Activated T-helper 1 cell treated with anti-CD3 and anti-CD28 coated beads, Interleukin-12 subunit alpha, Interleukin-12 subunit beta, Interleukin-2, Interleukin-4 antibody, amounts not matched to agents 30 ng/mL and 10 ng/mL and 1 ng/mL, durations not matched to agents 14 hours and 24 hours and 36 hours (primary cell): ENCODE measurements at regions of chr3 and their contacts with region 1.

Region 1: GRCh38 chr3:185983495-185984141 is 45.8 kb upstream of the TRA2B start:
- DNase-seq: peak; percentile 41
- H3K4me3 Mint-ChIP-seq: no peak overlapping the region
- H3K27ac Mint-ChIP-seq: no peak overlapping the region
- H3K4me1 Mint-ChIP-seq: peaks cover 5% of the 10 kb centered on the region
- H3K27me3 Mint-ChIP-seq: peaks cover 40% of the 10 kb centered on the region

Region 2: GRCh38 chr3:186241910-186242821 is 258.5 kb after region 1 on chr3:
- intact Hi-C with region 1: loop called (anchors 1 kb)
- DNase-seq: peak; percentile 30
- H3K4me3 Mint-ChIP-seq: peak overlapping the region; percentile 25
- H3K27ac Mint-ChIP-seq: no peak overlapping the region
- H3K4me1 Mint-ChIP-seq: no peaks in the 10 kb centered on the region
- H3K27me3 Mint-ChIP-seq: peaks cover 19% of the 10 kb centered on the region

Region 3: GRCh38 chr3:186277268-186277909 is 293.8 kb after region 1 on chr3:
- intact Hi-C with region 1: loop called (anchors 1 kb)
- DNase-seq: no peak
- H3K4me3 Mint-ChIP-seq: no peak overlapping the region
- H3K27ac Mint-ChIP-seq: no peak overlapping the region
- H3K4me1 Mint-ChIP-seq: no peaks in the 10 kb centered on the region
- H3K27me3 Mint-ChIP-seq: peaks cover 12% of the 10 kb centered on the region

Region 4: GRCh38 chr3:186315581-186316354 is 332.1 kb after region 1 on chr3:
- intact Hi-C with region 1: no loop called
- DNase-seq: no peak
- H3K4me3 Mint-ChIP-seq: no peak overlapping the region
- H3K27ac Mint-ChIP-seq: no peak overlapping the region
- H3K4me1 Mint-ChIP-seq: no peaks in the 10 kb centered on the region
- H3K27me3 Mint-ChIP-seq: peaks cover 10% of the 10 kb centered on the region

Region 5: GRCh38 chr3:186540221-186540834 is 556.7 kb after region 1 on chr3:
- intact Hi-C with region 1: loop called (anchors 1 kb)
- DNase-seq: peak; percentile 76
- H3K4me3 Mint-ChIP-seq: no peak overlapping the region
- H3K27ac Mint-ChIP-seq: no peak overlapping the region
- H3K4me1 Mint-ChIP-seq: peaks cover 55% of the 10 kb centered on the region
- H3K27me3 Mint-ChIP-seq: no peaks in the 10 kb centered on the region

Region 6: DNA sequence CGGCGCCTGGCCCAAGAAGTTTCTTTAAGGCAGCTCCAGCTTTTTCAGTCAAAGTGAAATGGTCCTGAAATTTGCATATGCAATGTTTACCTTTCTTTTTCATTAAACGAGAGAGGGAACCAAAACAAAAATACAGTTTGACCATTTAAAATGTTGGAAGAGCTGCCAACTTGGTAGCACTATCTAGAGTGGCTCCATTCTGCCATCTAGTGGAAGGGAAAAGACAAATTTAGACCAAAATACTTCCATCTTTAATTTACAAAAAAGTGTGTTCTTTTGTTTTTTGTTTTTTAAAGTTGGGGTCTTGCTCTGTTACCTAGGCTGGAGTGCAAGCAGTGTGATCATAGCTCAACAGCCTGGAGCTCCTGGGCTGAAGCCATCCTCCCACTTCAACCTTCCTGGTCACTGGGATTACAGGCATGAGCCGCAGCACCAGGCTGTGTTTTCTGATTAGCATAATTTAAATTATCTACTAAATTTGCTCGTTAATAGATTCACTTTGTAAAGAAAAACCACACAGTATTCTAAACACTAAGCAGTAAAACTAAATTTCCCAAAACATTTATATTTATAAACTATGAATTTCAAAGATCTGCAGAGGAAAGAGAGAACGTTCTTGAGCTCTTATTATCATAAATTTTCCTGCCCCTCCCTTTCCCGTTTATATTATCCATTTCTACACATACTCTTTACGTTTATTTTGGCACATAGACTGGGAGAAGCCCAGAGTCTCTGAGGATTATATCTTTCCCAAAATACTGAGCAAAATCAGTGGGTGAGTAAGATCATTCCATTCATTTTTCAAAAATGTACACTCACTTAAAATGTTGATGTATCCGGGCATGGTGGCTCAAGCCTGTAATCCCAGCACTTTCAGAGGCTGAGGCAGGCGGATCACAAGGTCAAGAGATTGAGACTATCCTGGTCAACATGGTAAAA is 838.1 kb after region 1 on chr3:
- intact Hi-C with region 1: loop called (anchors 1 kb)
- DNase-seq: no peak
- H3K4me3 Mint-ChIP-seq: no peak overlapping the region
- H3K27ac Mint-ChIP-seq: no peak overlapping the region
- H3K4me1 Mint-ChIP-seq: peaks cover 18% of the 10 kb centered on the region
- H3K27me3 Mint-ChIP-seq: peaks cover 8% of the 10 kb centered on the region